T-cell (primary cell): ENCODE measurements at regions of chr1 and their contacts with region 1.

Region 1: GRCh38 chr1:148307583-148308190 is 155.6 kb upstream of the NBPF11 start:
- DNase-seq: peak in 1 of 35 experiments; percentile 22
- ATAC-seq: no peak
- H3K4me3 ChIP-seq: no peak overlapping the region
- H3K4me3 Mint-ChIP-seq: no peak overlapping the region
- H3K27ac ChIP-seq: no peak overlapping the region
- H3K27ac Mint-ChIP-seq: no peak overlapping the region
- H3K4me1 ChIP-seq: peaks cover 7 to 9% of the 10 kb centered on the region in 2 experiments
- H3K4me1 Mint-ChIP-seq: peaks cover 11 to 23% (median 13%) of the 10 kb centered on the region in 3 donors
- H3K27me3 ChIP-seq: peaks cover 11 to 49% of the 10 kb centered on the region in 2 experiments
- H3K27me3 Mint-ChIP-seq: peaks cover 57 to 77% of the 10 kb centered on the region in 2 donors

Region 2: GRCh38 chr1:148264374-148265276 is 43.1 kb before region 1 on chr1:
- CTCF ChIA-PET with region 1: no interaction called
- POLR2A ChIA-PET with region 1: interaction called in 1 of 2 experiments, 13 read pairs
- DNase-seq: peak in 4 of 35 experiments; percentile 5 to 21 (median 8)
- ATAC-seq: no peak
- H3K4me3 ChIP-seq: peak overlapping the region in 1 of 2 donors; percentile 67
- H3K4me3 Mint-ChIP-seq: peak overlapping the region; percentile 84 to 92 (median 91)
- H3K27ac ChIP-seq: no peak overlapping the region
- H3K27ac Mint-ChIP-seq: peak overlapping the region; percentile 95 to 98
- H3K4me1 ChIP-seq: peaks cover 4 to 13% of the 10 kb centered on the region in 2 experiments
- H3K4me1 Mint-ChIP-seq: peaks cover 12% of the 10 kb centered on the region in 3 donors
- H3K27me3 ChIP-seq: peaks cover 2 to 4% of the 10 kb centered on the region in 2 experiments
- H3K27me3 Mint-ChIP-seq: no peaks in the 10 kb centered on the region